ENCODE measurements at regions of chr1 and their contacts with region 1.

Region 1: DNA sequence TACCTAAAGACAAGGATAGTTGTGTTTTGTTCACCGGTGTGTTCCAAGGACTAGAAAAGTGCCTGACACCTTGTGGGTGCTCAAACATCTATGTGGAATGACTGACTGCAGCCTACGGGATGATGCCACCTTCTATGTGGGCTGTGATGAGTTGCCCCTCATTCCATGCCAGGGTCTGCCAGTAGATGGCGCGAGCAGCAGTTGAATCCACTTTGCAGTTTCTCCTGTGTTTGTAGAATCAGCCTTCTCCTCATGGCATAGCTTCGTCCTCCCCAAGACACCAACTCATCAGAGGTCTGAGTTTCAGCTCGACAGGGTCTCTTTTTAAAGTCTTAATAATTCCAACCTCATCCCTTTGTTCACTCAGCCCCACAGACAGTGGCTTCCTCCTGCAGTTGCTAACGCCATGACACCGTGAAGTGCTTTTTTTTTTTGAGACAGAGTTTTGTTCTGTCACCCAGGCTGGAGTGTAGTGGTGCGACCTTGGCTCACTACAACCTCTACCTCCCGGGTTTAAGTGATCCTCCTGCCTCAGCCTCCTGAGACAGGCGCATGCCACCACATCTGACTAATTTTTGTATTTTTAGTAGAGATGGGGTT is 133.7 kb downstream of the CAPN8 start:
- DNase-seq: no peak
- ATAC-seq: peak; percentile 95
- H3K4me3 ChIP-seq: no peak overlapping the region
- H3K27ac ChIP-seq: no peak overlapping the region
- H3K4me1 ChIP-seq: no peaks in the 10 kb centered on the region
- H3K27me3 ChIP-seq: no peaks in the 10 kb centered on the region; a peak in 1 of 4 replicates
- CTCF ChIP-seq: peak; percentile 84 to 86 (median 84)
- EP300 ChIP-seq: no peak
- POLR2A ChIP-seq: no peak
- RAD21 ChIP-seq: peak; percentile 78

Region 2: DNA sequence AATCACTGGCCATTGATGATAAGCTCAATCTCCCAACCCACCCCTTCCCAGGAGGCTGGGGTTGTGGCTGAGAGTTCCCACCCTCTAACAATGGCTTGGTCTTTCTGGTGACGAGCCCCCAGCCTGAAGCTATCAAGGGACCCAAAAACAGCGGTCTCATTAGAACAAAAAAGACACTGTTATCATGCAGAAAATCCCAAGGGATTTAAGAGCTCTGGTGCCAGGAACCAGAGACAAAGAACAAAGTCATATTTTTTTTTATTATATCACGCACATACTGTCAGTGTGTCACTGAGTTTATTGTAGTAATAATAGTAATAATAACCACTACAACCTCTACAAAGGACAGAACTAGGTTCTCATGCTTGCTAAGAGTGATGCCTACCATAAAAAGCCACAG is 94.7 kb before region 1 on chr1:
- CTCF ChIA-PET with region 1: no interaction called
- POLR2A ChIA-PET with region 1: no interaction called
- RAD21 ChIA-PET with region 1: no interaction called
- SMC1A ChIA-PET with region 1: no interaction called
- in situ Hi-C with region 1: no loop called
- intact Hi-C with region 1: no loop called
- DNase-seq: no peak
- ATAC-seq: no peak
- H3K4me3 ChIP-seq: no peak overlapping the region
- H3K27ac ChIP-seq: no peak overlapping the region
- H3K4me1 ChIP-seq: no peaks in the 10 kb centered on the region
- H3K27me3 ChIP-seq: no peaks in the 10 kb centered on the region
- CTCF ChIP-seq: no peak
- EP300 ChIP-seq: no peak
- POLR2A ChIP-seq: no peak
- RAD21 ChIP-seq: no peak

Region 3: GRCh38 chr1:223455470-223455869 is 76.4 kb before region 1 on chr1:
- CTCF ChIA-PET with region 1: no interaction called
- POLR2A ChIA-PET with region 1: no interaction called
- RAD21 ChIA-PET with region 1: no interaction called
- SMC1A ChIA-PET with region 1: no interaction called
- in situ Hi-C with region 1: no loop called
- intact Hi-C with region 1: no loop called
- DNase-seq: no peak
- ATAC-seq: no peak
- H3K4me3 ChIP-seq: no peak overlapping the region
- H3K27ac ChIP-seq: no peak overlapping the region
- H3K4me1 ChIP-seq: no peaks in the 10 kb centered on the region
- H3K27me3 ChIP-seq: peaks cover 0 to 2% of the 10 kb centered on the region in 2 experiments; a peak in 1 of 4 replicates
- CTCF ChIP-seq: no peak
- EP300 ChIP-seq: no peak
- POLR2A ChIP-seq: no peak
- RAD21 ChIP-seq: no peak

Region 4: DNA sequence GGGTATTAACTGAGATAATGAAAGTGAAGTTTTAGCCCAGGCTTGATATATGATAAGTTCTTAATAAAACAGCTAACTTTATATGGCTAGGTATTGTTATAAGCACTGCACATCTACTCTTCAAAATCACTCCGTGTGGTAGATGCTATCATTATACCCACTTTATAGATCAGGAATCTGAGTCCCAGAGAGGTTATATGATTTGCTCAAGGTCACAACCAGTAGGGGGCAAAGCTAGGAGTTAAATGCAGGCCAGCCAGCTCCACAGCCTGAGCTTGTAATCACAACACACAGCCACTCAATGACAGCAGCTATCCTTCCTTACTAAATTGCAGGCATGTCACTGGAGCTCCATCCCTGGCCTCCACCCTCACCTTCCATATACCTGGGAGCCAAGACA is 17.9 kb after region 1 on chr1:
- CTCF ChIA-PET with region 1: interaction called, 73 read pairs
- POLR2A ChIA-PET with region 1: interaction called, 4 read pairs
- RAD21 ChIA-PET with region 1: interaction called, 11 read pairs
- SMC1A ChIA-PET with region 1: interaction called, 40 read pairs
- in situ Hi-C with region 1: no loop called
- intact Hi-C with region 1: no loop called
- DNase-seq: no peak
- ATAC-seq: peak; percentile 40
- H3K4me3 ChIP-seq: no peak overlapping the region
- H3K27ac ChIP-seq: no peak overlapping the region
- H3K4me1 ChIP-seq: peaks cover 20% of the 10 kb centered on the region
- H3K27me3 ChIP-seq: no peaks in the 10 kb centered on the region
- CTCF ChIP-seq: peak in 2 of 3 experiments; percentile 20 to 29; a peak in 2 of 6 replicates
- EP300 ChIP-seq: no peak
- POLR2A ChIP-seq: no peak
- RAD21 ChIP-seq: no peak

Region 5: DNA sequence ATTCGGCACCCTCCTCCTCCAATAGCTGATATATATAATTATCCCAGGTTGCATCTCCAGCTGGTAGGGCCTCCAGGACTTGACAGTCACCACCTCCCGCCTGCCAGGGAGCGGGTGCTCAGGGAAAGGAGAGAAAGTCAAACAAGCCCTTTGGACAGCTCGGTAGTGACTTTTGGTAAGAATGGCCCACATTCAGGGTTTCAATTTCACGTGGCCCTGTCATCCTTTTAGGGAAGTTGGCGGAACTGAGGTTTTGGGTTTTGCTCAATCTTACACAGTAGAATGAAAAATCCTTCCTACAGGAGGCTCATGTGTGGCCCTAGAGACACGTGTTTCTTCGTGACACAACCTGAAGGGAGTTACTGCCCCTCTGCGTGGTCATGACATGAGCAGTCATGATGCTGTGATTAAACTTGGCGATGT is 89.5 kb after region 1 on chr1:
- CTCF ChIA-PET with region 1: interaction called, 60 read pairs
- POLR2A ChIA-PET with region 1: interaction called, 4 read pairs
- RAD21 ChIA-PET with region 1: interaction called, 5 read pairs
- SMC1A ChIA-PET with region 1: interaction called, 31 read pairs
- in situ Hi-C with region 1: no loop called
- intact Hi-C with region 1: no loop called
- DNase-seq: peak; percentile 60
- ATAC-seq: peak; percentile 94
- H3K4me3 ChIP-seq: no peak overlapping the region
- H3K27ac ChIP-seq: no peak overlapping the region
- H3K4me1 ChIP-seq: peaks cover 5% of the 10 kb centered on the region; the same call in 1 of the 2 replicates
- H3K27me3 ChIP-seq: 0 out of 4 replicates have a peak, but pooled peaks cover 0 to 3% of the 10 kb centered on the region in 2 experiments
- CTCF ChIP-seq: no peak
- EP300 ChIP-seq: peak in 1 of 2 experiments; percentile 88; a peak in 2 of 4 replicates
- POLR2A ChIP-seq: no peak
- RAD21 ChIP-seq: peak; percentile 2; the same call in 1 of the 2 replicates

Region 6: DNA sequence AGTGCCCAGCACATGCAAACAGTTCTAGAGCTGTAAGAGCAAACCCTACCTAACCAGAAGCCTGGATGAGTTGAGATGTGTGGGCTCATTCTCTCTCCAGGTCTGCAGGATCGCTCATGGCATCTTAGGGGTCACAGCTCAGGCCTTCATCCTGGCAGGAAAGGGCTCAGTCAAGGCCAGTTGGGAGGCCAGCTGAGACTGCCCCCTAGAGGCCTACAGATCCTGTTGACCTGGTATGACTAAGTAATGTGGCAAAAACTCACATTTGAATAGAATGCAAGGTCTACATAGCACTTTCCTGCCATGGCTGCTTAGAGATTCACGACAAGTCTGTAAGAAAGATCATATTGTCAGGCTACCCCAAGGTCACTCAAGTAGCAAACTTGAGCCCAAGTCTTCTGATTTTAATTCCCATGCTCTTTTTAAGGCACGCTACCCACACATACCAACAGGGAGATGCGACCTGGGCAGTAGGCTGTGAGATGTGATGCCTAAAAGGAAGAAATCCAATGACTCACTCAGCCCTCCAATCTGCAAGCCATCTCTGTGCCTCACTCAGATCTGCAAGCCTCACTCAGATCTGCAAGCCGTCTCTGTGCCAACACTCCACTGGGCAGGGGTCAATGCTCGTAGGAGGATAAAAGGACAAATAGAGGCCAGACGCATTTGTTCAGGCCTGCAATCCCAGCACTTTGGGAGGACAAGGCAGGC is 138.8 kb after region 1 on chr1:
- CTCF ChIA-PET with region 1: interaction called, 15 read pairs
- POLR2A ChIA-PET with region 1: no interaction called
- RAD21 ChIA-PET with region 1: interaction called, 3 read pairs
- SMC1A ChIA-PET with region 1: interaction called, 7 read pairs
- in situ Hi-C with region 1: no loop called
- intact Hi-C with region 1: loop called (anchors 5 kb)
- DNase-seq: no peak
- ATAC-seq: peak; percentile 88
- H3K4me3 ChIP-seq: no peak overlapping the region
- H3K27ac ChIP-seq: no peak overlapping the region
- H3K4me1 ChIP-seq: no peaks in the 10 kb centered on the region
- H3K27me3 ChIP-seq: 0 out of 4 replicates have a peak, but pooled peaks cover 0 to 2% of the 10 kb centered on the region in 2 experiments
- CTCF ChIP-seq: peak; percentile 49 to 61 (median 50)
- EP300 ChIP-seq: no peak
- POLR2A ChIP-seq: no peak
- RAD21 ChIP-seq: peak; percentile 53

Region 7: GRCh38 chr1:223695941-223696340 is 164.1 kb after region 1 on chr1:
- CTCF ChIA-PET with region 1: interaction called, 30 read pairs
- POLR2A ChIA-PET with region 1: no interaction called
- RAD21 ChIA-PET with region 1: interaction called, 7 read pairs
- SMC1A ChIA-PET with region 1: interaction called, 4 read pairs
- in situ Hi-C with region 1: no loop called
- intact Hi-C with region 1: no loop called
- DNase-seq: no peak
- ATAC-seq: no peak
- H3K4me3 ChIP-seq: no peak overlapping the region
- H3K27ac ChIP-seq: no peak overlapping the region
- H3K4me1 ChIP-seq: peaks cover 3% of the 10 kb centered on the region; the same call in 1 of the 2 replicates
- H3K27me3 ChIP-seq: no peaks in the 10 kb centered on the region
- CTCF ChIP-seq: no peak
- EP300 ChIP-seq: no peak
- POLR2A ChIP-seq: no peak
- RAD21 ChIP-seq: no peak